ENCODE measurements at regions of chr10 and their contacts with region 1.

Region 1: DNA sequence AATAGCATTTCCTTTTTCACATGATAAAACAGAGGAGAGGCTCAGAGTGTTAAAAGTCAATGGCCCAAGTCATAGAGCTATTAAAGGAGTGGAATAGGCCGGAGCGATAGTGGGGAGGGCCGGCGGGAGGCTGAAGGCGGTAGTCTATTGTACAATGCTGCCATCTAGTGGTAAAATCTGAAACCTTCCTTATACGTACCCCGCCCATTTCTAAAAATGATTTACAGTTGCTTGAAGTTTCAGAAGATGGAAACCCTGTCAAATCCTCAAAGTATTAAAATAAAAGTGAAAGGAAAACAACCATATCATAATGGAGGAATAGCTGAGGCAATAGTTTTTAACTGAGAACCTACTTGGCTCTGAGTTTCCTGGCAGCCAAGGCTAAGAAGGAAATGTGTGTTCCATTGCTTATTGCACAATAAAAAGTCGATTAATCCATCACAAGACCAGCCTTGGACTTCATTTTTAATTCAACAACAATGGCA is 209.1 kb downstream of the CCSER2 start:
- DNase-seq: peak in 1 of 2 donors; percentile 81
- ATAC-seq: peak; percentile 80 to 84 (median 83)
- H3K4me3 ChIP-seq: no peak overlapping the region
- H3K4me3 Mint-ChIP-seq: no peak overlapping the region
- H3K27ac ChIP-seq: no peak overlapping the region
- H3K27ac Mint-ChIP-seq: no peak overlapping the region
- H3K4me1 ChIP-seq: peaks cover 11% of the 10 kb centered on the region
- H3K4me1 Mint-ChIP-seq: peaks cover 7 to 12% of the 10 kb centered on the region in 2 donors
- H3K27me3 ChIP-seq: peaks cover 3% of the 10 kb centered on the region
- H3K27me3 Mint-ChIP-seq: peaks cover 14 to 15% of the 10 kb centered on the region in 2 donors
- CTCF ChIP-seq: peak; percentile 93

Region 2: DNA sequence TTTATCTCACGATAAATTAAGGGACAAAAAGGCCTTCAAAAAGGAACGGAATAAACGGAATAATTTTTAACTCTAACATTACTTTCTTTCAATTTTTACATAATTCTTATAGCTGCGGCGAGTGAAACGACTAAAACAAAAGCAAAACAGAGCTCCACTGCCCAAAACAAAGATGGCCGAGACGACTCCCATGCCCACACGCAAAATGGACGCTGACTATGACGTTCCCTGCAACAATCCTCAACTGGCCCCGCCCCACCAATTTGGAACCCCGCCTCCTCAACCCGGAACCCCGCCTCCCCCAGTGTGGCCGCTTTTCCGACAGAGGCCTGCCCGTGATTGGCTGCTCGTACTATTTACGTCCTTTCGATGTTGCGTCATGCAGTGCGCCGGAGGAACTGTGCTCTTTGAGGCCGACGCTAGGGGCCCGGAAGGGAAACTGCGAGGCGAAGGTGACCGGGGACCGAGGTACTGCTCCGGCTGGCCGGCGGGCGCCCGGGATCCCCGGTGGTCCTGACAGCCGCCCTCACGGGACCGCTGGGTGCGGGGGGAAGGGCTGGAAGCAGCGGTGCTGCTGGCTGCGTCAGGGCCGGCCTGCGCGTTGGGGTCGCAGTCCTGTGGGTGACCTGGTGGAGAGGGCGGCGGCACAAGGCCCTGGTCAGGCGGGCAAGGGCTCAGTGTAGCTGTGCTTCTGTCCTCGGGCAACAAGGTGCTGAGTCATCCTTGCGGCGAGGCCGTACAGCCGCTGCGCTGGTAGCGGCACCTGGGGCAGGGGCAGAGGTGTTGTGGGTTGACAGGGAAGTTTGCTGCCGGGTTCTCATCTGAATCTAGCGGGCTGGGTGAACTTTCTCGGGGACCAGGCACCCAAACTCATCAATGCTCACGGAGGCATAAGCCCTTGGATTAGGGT is 398.1 kb before region 1 on chr10 and contains the start of gene GHITM:
- intact Hi-C with region 1: loop called (anchors 10 kb)
- DNase-seq: peak; percentile 99 to 100
- ATAC-seq: peak; percentile 91 to 98 (median 93)
- H3K4me3 ChIP-seq: peak within 1 kb of the TSS; percentile 81
- H3K4me3 Mint-ChIP-seq: peak within 1 kb of the TSS; percentile 95
- H3K27ac ChIP-seq: peak within 1 kb of the TSS; percentile 94
- H3K27ac Mint-ChIP-seq: peak within 1 kb of the TSS; percentile 98
- H3K4me1 ChIP-seq: peaks cover 13% of the 10 kb centered on the region
- H3K4me1 Mint-ChIP-seq: peaks cover 31 to 32% of the 10 kb centered on the region in 2 donors
- H3K27me3 ChIP-seq: no peaks in the 10 kb centered on the region
- H3K27me3 Mint-ChIP-seq: peaks cover 14 to 16% of the 10 kb centered on the region in 2 donors
- CTCF ChIP-seq: peak; percentile 37
- total RNA-seq, gene GHITM: 84.3 to 89.3 (median 87.9) TPM

Region 3: DNA sequence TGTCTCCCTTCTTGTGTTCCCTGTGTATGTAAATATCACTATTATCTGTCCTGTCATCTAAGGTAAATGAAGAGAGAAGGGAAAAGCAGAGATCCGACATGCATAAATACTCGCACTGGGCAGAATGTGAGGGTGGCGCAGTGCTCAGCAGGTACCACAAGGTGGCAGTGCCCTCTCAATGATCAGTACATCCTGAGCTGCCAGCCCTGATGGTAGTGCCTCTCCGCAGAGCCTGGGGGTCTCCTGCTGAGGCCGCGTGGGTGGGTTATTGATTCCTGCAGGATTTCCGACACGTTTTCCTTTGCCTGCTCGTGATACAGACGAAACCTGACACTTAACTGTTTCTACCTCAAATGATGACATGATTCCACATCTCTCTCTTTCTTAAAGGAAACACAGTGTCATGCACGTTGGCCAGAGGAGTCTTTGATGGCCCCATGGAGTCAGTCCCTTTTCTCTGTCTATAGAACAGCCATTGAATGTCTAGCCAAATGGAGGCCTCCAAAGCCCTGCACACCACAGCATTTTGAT is 272.8 kb before region 1 on chr10:
- intact Hi-C with region 1: loop called (anchors 1 kb)
- DNase-seq: peak; percentile 62 to 85
- ATAC-seq: peak; percentile 84 to 98 (median 96)
- H3K4me3 ChIP-seq: no peak overlapping the region
- H3K4me3 Mint-ChIP-seq: no peak overlapping the region
- H3K27ac ChIP-seq: no peak overlapping the region
- H3K27ac Mint-ChIP-seq: no peak overlapping the region
- H3K4me1 ChIP-seq: peaks cover 5% of the 10 kb centered on the region
- H3K4me1 Mint-ChIP-seq: peaks cover 12 to 16% of the 10 kb centered on the region in 2 donors
- H3K27me3 ChIP-seq: no peaks in the 10 kb centered on the region
- H3K27me3 Mint-ChIP-seq: peaks cover 25 to 33% of the 10 kb centered on the region in 2 donors
- CTCF ChIP-seq: peak; percentile 97

Region 4: DNA sequence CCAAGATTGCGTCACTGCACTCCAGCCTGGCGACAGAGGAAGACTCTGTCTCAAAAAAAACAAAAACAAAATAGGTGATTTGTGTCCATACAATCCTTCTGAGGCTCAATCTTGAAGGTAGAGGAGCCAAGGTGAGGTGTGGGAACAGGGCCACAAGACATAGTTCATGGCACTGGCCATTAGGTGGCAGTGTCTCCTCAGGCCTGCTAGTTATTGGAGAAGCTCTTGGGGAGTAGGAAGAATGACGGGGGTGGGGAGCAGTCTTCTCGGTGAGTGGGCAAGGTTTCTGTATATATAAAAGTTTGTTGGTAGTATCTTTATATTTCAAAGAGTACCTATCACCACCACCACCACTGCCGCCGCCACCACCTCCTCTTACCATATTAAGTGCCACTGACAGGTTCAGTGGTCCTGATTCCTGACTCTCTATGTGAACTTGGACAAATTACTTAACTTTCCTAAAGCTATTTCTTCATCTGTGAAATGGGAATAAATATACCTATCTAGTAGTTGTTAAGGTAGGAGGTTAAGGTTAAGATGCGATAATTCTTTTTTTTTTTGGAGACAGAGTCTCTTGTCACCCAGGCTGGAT is 185.1 kb before region 1 on chr10:
- intact Hi-C with region 1: loop called (anchors 1 kb)
- DNase-seq: peak; percentile 58 to 86
- ATAC-seq: peak; percentile 83 to 87 (median 86)
- H3K4me3 ChIP-seq: no peak overlapping the region
- H3K4me3 Mint-ChIP-seq: no peak overlapping the region
- H3K27ac ChIP-seq: no peak overlapping the region
- H3K27ac Mint-ChIP-seq: peak overlapping the region; percentile 39 to 51
- H3K4me1 ChIP-seq: peaks cover 28% of the 10 kb centered on the region
- H3K4me1 Mint-ChIP-seq: peaks cover 64 to 70% of the 10 kb centered on the region in 2 donors
- H3K27me3 ChIP-seq: no peaks in the 10 kb centered on the region
- H3K27me3 Mint-ChIP-seq: no peaks in the 10 kb centered on the region
- CTCF ChIP-seq: peak; percentile 76

Region 5: DNA sequence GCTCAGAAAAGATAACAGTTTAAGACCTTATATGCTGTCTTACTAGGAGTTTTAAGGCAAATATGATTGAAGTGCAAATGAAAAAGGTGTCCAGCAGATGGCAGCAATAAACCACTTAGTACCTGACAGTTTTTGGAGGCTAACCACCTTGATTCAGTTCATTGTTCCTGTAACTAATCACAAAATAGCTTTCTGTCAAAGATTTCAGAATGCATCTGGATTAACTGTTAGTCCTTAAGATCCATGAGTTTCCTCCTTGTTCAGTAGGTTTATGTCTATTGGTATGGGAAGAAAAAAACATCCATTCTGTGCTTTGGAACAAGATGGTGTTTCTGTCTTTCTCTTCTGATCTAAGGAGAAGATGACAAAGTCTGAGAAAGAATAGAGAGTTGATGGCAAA is 162.5 kb before region 1 on chr10:
- intact Hi-C with region 1: loop called (anchors 1 kb)
- DNase-seq: peak in 1 of 2 donors; percentile 81
- ATAC-seq: peak in 2 of 3 donors; percentile 63 to 64
- H3K4me3 ChIP-seq: no peak overlapping the region
- H3K4me3 Mint-ChIP-seq: no peak overlapping the region
- H3K27ac ChIP-seq: no peak overlapping the region
- H3K27ac Mint-ChIP-seq: peak overlapping the region in 1 of 2 donors; percentile 47
- H3K4me1 ChIP-seq: no peaks in the 10 kb centered on the region
- H3K4me1 Mint-ChIP-seq: peaks cover 32 to 49% of the 10 kb centered on the region in 2 donors
- H3K27me3 ChIP-seq: no peaks in the 10 kb centered on the region
- H3K27me3 Mint-ChIP-seq: no peaks in the 10 kb centered on the region
- CTCF ChIP-seq: peak; percentile 79

Region 6: GRCh38 chr10:84447701-84448400 is 89.6 kb before region 1 on chr10:
- intact Hi-C with region 1: loop called (anchors 10 kb)
- DNase-seq: no peak
- ATAC-seq: no peak
- H3K4me3 ChIP-seq: no peak overlapping the region
- H3K4me3 Mint-ChIP-seq: no peak overlapping the region
- H3K27ac ChIP-seq: no peak overlapping the region
- H3K27ac Mint-ChIP-seq: peak overlapping the region in 1 of 2 donors; percentile 67
- H3K4me1 ChIP-seq: no peaks in the 10 kb centered on the region
- H3K4me1 Mint-ChIP-seq: peaks cover 16 to 18% of the 10 kb centered on the region in 2 donors
- H3K27me3 ChIP-seq: no peaks in the 10 kb centered on the region
- H3K27me3 Mint-ChIP-seq: no peaks in the 10 kb centered on the region
- CTCF ChIP-seq: no peak

Measured in natural killer cell (primary cell).